CD8-positive, alpha-beta T cell (primary cell): ENCODE measurements at regions of chr19 and their contacts with region 1.

Region 1: DNA sequence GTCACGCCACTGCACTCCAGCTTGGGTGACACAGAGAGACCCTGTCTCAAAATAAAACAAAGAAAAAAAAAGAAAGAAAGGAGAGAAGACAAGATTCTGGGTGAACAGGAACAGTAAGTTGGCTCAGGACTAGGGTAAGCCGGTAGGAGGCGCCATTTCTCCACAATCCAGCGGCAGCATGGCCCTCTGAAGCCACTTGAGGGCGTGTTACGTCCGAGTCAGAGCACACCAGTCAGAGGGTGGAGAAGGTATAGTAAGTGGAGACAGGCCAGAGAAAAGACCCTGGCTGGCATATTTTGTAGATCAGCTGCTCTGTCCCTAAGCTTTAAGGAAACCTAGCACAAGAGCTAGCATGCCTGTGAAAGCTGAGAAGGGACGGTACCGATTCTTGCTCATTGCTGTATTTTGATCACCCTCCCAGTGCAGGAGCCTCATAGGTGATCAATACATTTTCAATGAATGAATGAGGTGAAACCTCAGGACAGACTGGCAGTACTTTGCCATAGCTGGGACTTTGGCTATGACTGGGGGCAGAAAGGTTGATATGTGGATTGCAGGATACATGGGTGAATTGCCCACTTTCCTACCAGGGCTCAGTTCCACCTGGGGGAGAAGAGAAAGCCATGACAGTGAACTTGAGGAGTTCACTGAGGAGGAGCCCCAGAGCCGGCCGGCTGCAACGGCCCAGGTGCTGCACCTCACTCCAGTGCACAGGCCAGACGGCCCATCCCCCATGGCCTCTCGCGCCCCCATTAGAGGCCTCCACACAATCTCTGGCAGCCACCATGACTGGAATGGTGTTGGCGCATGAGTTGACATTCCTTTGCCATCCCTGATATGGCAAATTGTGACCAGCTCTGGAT is 23.5 kb downstream of the POU2F2 start:
- DNase-seq: peak; percentile 83 to 94 (median 91)
- ATAC-seq: peak; percentile 99
- H3K4me3 ChIP-seq: no peak overlapping the region
- H3K4me3 Mint-ChIP-seq: no peak overlapping the region
- H3K27ac ChIP-seq: no peak overlapping the region
- H3K27ac Mint-ChIP-seq: peak overlapping the region; percentile 20
- H3K4me1 ChIP-seq: peaks cover 4% of the 10 kb centered on the region
- H3K4me1 Mint-ChIP-seq: peaks cover 8% of the 10 kb centered on the region
- H3K27me3 ChIP-seq: no peaks in the 10 kb centered on the region
- H3K27me3 Mint-ChIP-seq: no peaks in the 10 kb centered on the region
- CTCF ChIP-seq: peak; percentile 100

Region 2: DNA sequence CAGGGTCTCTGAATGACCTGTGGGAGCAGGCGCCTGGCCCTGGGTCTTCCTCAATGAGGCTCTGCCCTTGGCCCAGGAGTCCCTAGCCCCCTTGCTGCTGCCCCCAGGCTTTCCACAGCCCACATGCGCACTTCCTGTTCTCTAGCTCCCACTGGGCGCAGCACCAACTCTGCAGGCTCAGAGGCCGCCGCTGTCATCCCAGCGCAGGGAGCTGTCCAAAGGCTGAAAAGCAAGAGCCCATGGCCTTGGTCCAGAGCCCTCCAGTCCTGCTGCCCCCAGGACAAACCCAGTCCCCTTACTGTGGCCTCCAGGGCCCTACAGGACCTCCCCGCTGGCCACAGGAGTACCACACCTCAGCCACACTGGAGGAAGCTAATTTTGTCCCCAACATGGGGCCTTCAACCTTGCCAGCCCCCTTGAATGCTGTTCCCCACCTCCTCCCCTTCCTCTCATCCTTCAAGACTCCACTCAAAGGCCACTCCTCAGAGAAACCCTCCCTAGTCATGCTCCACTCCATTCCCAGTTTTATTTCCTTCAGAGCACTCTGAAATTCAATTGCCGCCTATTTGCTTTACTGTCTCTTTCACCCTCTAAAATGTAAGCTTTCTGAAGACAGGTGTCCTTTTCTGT is 31.5 kb after region 1 on chr19:
- CTCF ChIA-PET with region 1: interaction called, 16 read pairs
- POLR2A ChIA-PET with region 1: interaction called, 3 read pairs
- intact Hi-C with region 1: no loop called
- DNase-seq: peak in 3 of 9 experiments; percentile 18 to 48 (median 36)
- ATAC-seq: peak; percentile 59
- H3K4me3 ChIP-seq: no peak overlapping the region
- H3K4me3 Mint-ChIP-seq: no peak overlapping the region
- H3K27ac ChIP-seq: no peak overlapping the region
- H3K27ac Mint-ChIP-seq: no peak overlapping the region
- H3K4me1 ChIP-seq: peaks cover 10% of the 10 kb centered on the region
- H3K4me1 Mint-ChIP-seq: peaks cover 8% of the 10 kb centered on the region
- H3K27me3 ChIP-seq: no peaks in the 10 kb centered on the region
- H3K27me3 Mint-ChIP-seq: no peaks in the 10 kb centered on the region
- CTCF ChIP-seq: no peak

Region 3: GRCh38 chr19:42184401-42184861 is 75.7 kb after region 1 on chr19:
- CTCF ChIA-PET with region 1: interaction called, 79 read pairs
- POLR2A ChIA-PET with region 1: interaction called, 3 read pairs
- intact Hi-C with region 1: loop called (anchors 1 kb)
- DNase-seq: peak; percentile 35 to 83 (median 74)
- ATAC-seq: peak; percentile 67
- H3K4me3 ChIP-seq: no peak overlapping the region
- H3K4me3 Mint-ChIP-seq: no peak overlapping the region
- H3K27ac ChIP-seq: peak overlapping the region in 1 of 2 experiments; percentile 33
- H3K27ac Mint-ChIP-seq: no peak overlapping the region
- H3K4me1 ChIP-seq: peaks cover 20% of the 10 kb centered on the region
- H3K4me1 Mint-ChIP-seq: peaks cover 41% of the 10 kb centered on the region
- H3K27me3 ChIP-seq: peaks cover 0 to 3% of the 10 kb centered on the region in 2 experiments
- H3K27me3 Mint-ChIP-seq: peaks cover 4% of the 10 kb centered on the region
- CTCF ChIP-seq: peak; percentile 81

Region 4: GRCh38 chr19:42290523-42291438 is 182.0 kb after region 1 on chr19:
- CTCF ChIA-PET with region 1: interaction called, 45 read pairs
- POLR2A ChIA-PET with region 1: no interaction called
- intact Hi-C with region 1: loop called (anchors 1 kb)
- DNase-seq: peak in 8 of 9 experiments; percentile 45 to 79 (median 72)
- ATAC-seq: peak; percentile 90
- H3K4me3 ChIP-seq: no peak overlapping the region
- H3K4me3 Mint-ChIP-seq: no peak overlapping the region
- H3K27ac ChIP-seq: no peak overlapping the region
- H3K27ac Mint-ChIP-seq: no peak overlapping the region
- H3K4me1 ChIP-seq: peaks cover 2% of the 10 kb centered on the region
- H3K4me1 Mint-ChIP-seq: peaks cover 8% of the 10 kb centered on the region
- H3K27me3 ChIP-seq: no peaks in the 10 kb centered on the region
- H3K27me3 Mint-ChIP-seq: no peaks in the 10 kb centered on the region
- CTCF ChIP-seq: peak; percentile 57

Region 5: DNA sequence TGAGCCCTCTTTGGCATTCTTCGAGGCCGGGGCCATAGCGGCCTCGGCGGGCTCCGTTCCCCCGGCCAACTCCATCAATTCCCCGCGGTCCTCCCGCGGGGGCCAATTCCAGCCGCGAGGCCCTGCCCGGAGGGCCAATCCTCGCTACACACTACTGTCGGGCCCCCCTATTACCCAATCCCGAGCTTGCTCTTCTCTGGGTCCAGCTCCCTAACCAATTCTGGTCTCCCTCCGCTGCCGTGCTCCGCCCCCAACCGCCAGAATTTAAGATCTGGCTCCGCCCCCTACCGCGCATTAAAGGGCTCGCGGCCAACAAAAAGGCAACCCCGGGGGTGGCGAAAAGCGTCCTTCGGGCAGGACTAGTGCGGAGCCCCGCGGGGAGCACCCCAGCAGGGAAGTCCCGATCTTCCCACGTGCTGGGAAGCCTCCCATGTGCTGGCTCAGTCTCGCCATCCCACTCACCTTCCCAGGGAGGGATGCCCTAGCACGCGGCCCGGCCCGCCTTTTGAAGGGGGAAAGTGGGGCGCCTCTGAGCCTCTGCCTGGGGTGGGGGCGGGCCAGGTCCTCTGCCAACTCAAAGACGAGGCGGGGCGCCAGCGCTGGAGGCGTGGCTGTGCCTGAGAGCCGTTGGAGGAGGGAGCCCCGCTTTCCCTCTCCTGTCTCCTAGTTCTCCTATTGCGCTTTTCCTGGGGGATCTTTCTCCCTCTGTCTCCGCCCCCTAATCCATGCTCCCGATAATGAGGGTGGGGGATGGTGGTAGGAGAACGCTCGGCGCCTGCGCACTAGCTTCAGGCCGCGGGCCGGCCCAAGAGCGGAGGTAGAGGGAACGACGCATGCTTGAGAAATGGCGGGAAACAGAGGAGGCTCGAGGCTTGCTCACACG is 314.9 kb after region 1 on chr19:
- CTCF ChIA-PET with region 1: interaction called, 4 read pairs
- POLR2A ChIA-PET with region 1: interaction called, 3 read pairs
- intact Hi-C with region 1: loop called in 1 of 2 experiments (anchors 5 kb)
- DNase-seq: peak; percentile 87 to 95 (median 93)
- ATAC-seq: peak; percentile 86
- H3K4me3 ChIP-seq: peak overlapping the region; percentile 78 to 87
- H3K4me3 Mint-ChIP-seq: peak overlapping the region; percentile 93
- H3K27ac ChIP-seq: peak overlapping the region; percentile 49 to 74
- H3K27ac Mint-ChIP-seq: peak overlapping the region; percentile 87
- H3K4me1 ChIP-seq: peaks cover 31% of the 10 kb centered on the region
- H3K4me1 Mint-ChIP-seq: peaks cover 41% of the 10 kb centered on the region
- H3K27me3 ChIP-seq: no peaks in the 10 kb centered on the region
- H3K27me3 Mint-ChIP-seq: no peaks in the 10 kb centered on the region
- CTCF ChIP-seq: no peak